A673 (cell line): ENCODE measurements at regions of chr15 and their contacts with region 1.

Region 1: DNA sequence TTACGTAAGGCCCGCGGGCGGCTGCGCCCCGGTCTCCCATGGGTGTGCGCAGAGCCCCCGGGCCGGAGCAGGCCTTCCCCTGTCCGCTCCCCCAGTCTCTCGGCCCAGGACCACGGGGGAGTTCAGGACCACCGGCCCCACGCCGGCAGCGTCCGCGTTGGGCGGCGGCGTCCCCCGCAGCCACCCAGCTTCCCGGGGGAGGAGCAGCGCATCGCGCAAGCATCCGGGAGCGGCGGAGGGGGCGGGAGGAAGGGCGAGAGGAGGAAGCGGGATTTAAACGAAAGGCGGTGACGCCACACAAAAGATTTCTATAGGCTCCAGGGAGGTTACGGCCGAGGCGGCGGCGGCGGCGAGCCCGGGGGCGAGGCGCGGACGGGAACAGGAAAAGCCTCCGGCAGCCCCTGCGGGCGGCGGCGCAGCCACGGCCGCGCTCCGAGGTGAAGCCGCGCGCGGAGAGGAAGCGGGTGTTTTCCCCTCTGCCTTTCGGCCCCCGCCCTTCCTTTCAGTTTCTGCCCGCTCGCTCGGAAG is at the start of gene TLNRD1:
- DNase-seq: peak; percentile 94
- H3K4me3 ChIP-seq: peak within 1 kb of the TSS; percentile 91
- H3K27ac ChIP-seq: peak within 1 kb of the TSS; percentile 96
- H3K4me1 ChIP-seq: peaks cover 14% of the 10 kb centered on the region
- H3K27me3 ChIP-seq: no peaks in the 10 kb centered on the region
- CTCF ChIP-seq: no peak
- total RNA-seq, gene TLNRD1: 21.0 and 21.8 TPM in 2 replicates

Region 2: GRCh38 chr15:80989518-80990478 is 10.9 kb before region 1 on chr15 and contains the start of gene MESD:
- CTCF ChIA-PET with region 1: no interaction called
- POLR2A ChIA-PET with region 1: interaction called, 10 read pairs
- intact Hi-C with region 1: no loop called
- DNase-seq: peak; percentile 97
- H3K4me3 ChIP-seq: peak within 1 kb of the TSS; percentile 91
- H3K27ac ChIP-seq: peak within 1 kb of the TSS; percentile 86
- H3K4me1 ChIP-seq: peaks cover 12% of the 10 kb centered on the region
- H3K27me3 ChIP-seq: no peaks in the 10 kb centered on the region
- CTCF ChIP-seq: no peak
- total RNA-seq, gene MESD: 25.7 and 28.1 TPM in 2 replicates

Region 3: DNA sequence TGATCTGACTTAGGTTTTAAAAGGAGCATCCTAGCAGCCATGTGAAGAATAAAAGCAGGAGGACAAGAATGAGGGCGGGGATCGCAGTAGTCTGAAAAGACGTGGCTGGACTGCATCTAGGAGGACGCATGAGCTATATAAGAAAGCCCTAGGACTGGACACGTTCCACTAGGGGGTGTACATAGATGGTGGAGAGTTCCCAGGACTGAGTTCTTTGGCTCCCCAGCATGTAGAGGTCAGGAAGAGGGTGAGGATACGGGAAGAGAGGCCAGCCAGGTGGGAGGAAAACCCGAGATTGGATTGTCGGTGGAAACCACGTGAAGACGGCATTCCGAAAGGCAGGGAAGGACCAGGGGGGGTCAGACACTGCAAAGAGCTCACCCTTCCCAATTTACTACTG is 69.2 kb after region 1 on chr15:
- CTCF ChIA-PET with region 1: no interaction called
- POLR2A ChIA-PET with region 1: no interaction called
- intact Hi-C with region 1: loop called (anchors 10 kb)
- DNase-seq: no peak
- H3K4me3 ChIP-seq: no peak overlapping the region
- H3K27ac ChIP-seq: no peak overlapping the region
- H3K4me1 ChIP-seq: no peaks in the 10 kb centered on the region
- H3K27me3 ChIP-seq: no peaks in the 10 kb centered on the region
- CTCF ChIP-seq: no peak

Region 4: GRCh38 chr15:81106560-81106959 is 105.9 kb after region 1 on chr15:
- CTCF ChIA-PET with region 1: no interaction called
- POLR2A ChIA-PET with region 1: no interaction called
- intact Hi-C with region 1: loop called (anchors 5 kb)
- DNase-seq: peak; percentile 67
- H3K4me3 ChIP-seq: no peak overlapping the region
- H3K27ac ChIP-seq: no peak overlapping the region
- H3K4me1 ChIP-seq: peaks cover 4% of the 10 kb centered on the region
- H3K27me3 ChIP-seq: peaks cover 17% of the 10 kb centered on the region
- CTCF ChIP-seq: peak; percentile 79